ENCODE measurements at regions of chr1 and their contacts with region 1.

Region 1: GRCh38 chr1:153922972-153923925 is at the start of gene GATAD2B:
- DNase-seq: peak; percentile 100
- H3K4me3 ChIP-seq: peak within 1 kb of the TSS; percentile 68 to 91 (median 85)
- H3K27ac ChIP-seq: peak within 1 kb of the TSS; percentile 60
- H3K4me1 ChIP-seq: peaks cover 24% of the 10 kb centered on the region
- H3K27me3 ChIP-seq: no peaks in the 10 kb centered on the region
- CTCF ChIP-seq: no peak
- POLR2A ChIP-seq: peak; percentile 80
- total RNA-seq, gene GATAD2B: 46.3 and 49.2 TPM in 2 replicates

Region 2: DNA sequence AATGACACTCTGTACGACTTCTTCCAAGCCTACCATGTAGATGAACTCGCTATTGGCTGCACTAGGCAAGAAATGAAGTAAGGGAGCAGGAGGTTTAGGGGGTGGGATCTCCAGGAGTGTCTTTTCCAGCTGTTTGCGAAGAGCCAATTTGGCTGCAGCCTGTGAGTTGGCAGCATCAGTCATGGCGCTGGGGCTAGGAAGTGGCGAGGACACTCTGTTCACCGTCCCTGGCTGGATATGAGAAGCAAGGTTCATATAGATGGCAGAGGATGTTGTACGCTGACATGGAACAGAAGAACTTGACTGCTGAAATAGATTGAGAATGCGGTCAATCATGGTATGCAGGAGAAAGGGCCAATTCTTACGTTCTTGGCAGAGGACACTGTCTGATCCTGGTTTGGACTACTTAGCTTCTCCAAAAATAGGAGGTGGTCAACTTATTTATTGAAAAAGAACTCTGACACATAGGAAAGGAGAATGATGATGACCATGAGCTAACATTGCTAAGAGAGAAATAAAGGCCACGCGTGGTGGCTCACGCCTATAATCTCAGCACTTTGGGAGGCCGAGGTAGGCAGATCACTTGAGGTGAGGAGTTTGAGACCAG is 106.9 kb before region 1 on chr1:
- CTCF ChIA-PET with region 1: interaction called, 11 read pairs
- POLR2A ChIA-PET with region 1: no interaction called
- dilution Hi-C with region 1: no loop called
- intact Hi-C with region 1: loop called (anchors 1 kb)
- DNase-seq: no peak
- H3K4me3 ChIP-seq: no peak overlapping the region
- H3K27ac ChIP-seq: no peak overlapping the region
- H3K4me1 ChIP-seq: peaks cover 10% of the 10 kb centered on the region
- H3K27me3 ChIP-seq: no peaks in the 10 kb centered on the region
- CTCF ChIP-seq: no peak
- POLR2A ChIP-seq: no peak

Region 3: DNA sequence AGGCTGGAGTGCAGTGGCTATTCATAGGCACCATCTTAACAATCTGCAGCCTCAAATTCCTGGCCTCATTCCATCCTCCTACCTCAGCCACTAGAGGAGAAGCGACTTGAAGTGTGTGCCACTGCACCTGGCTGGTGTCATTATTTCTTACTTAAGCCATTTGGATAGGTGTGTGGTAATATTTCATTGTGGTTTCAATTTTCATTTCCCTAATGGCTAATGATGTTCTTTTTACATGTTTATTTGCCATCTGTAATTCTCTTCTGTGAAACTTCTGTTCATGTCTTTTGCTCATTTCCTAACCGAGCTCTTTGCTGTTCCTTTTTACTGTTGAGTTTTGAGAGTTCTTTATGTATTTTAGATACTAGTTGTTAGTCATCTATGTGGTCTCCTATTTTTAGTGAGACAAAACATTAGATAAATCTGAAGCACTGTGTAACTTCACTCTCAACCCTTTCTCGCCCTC is 81.2 kb before region 1 on chr1:
- CTCF ChIA-PET with region 1: no interaction called
- POLR2A ChIA-PET with region 1: no interaction called
- dilution Hi-C with region 1: no loop called
- intact Hi-C with region 1: no loop called
- DNase-seq: no peak
- H3K4me3 ChIP-seq: no peak overlapping the region
- H3K27ac ChIP-seq: no peak overlapping the region
- H3K4me1 ChIP-seq: no peaks in the 10 kb centered on the region
- H3K27me3 ChIP-seq: no peaks in the 10 kb centered on the region
- CTCF ChIP-seq: no peak
- POLR2A ChIP-seq: no peak

Region 4: DNA sequence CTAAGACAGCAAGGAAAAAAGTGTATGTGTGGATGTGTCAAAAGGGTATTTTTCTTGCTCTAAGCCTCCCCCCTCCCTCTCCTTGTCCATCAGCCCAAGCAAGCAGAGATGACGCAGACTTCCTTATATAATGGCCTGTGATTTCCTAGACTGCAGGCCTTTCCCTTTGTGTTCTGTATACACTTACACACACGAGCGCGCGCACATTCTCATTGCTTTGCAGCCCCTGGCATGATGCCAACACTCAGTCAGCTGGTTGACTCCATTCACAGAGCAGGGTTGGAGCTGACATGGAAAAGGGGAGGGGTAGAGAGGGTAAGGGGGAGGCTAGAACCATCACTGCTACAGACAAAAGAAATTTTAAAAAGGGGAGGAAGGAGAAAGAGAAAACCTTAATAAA is 42.3 kb before region 1 on chr1:
- CTCF ChIA-PET with region 1: interaction called, 4 read pairs
- POLR2A ChIA-PET with region 1: interaction called, 3 read pairs
- dilution Hi-C with region 1: no loop called
- intact Hi-C with region 1: loop called (anchors 1 kb)
- DNase-seq: peak; percentile 99
- H3K4me3 ChIP-seq: peak overlapping the region; percentile 12 to 70 (median 32)
- H3K27ac ChIP-seq: peak overlapping the region; percentile 81
- H3K4me1 ChIP-seq: peaks cover 23% of the 10 kb centered on the region
- H3K27me3 ChIP-seq: no peaks in the 10 kb centered on the region
- CTCF ChIP-seq: no peak
- POLR2A ChIP-seq: no peak

Region 5: GRCh38 chr1:153958111-153958960 is 35.1 kb after region 1 on chr1 and contains the start of gene CRTC2:
- CTCF ChIA-PET with region 1: interaction called, 5 read pairs
- POLR2A ChIA-PET with region 1: no interaction called
- dilution Hi-C with region 1: no loop called
- intact Hi-C with region 1: loop called (anchors 1 kb)
- DNase-seq: peak; percentile 98
- H3K4me3 ChIP-seq: peak within 1 kb of the TSS; percentile 47 to 80 (median 75)
- H3K27ac ChIP-seq: peak within 1 kb of the TSS; percentile 18
- H3K4me1 ChIP-seq: peaks cover 35% of the 10 kb centered on the region
- H3K27me3 ChIP-seq: no peaks in the 10 kb centered on the region
- CTCF ChIP-seq: no peak
- POLR2A ChIP-seq: peak; percentile 33
- total RNA-seq, gene CRTC2: 39.0 and 42.2 TPM in 2 replicates

Region 6: GRCh38 chr1:154183045-154183915 is 260.0 kb after region 1 on chr1:
- CTCF ChIA-PET with region 1: no interaction called
- POLR2A ChIA-PET with region 1: no interaction called
- dilution Hi-C with region 1: no loop called
- intact Hi-C with region 1: no loop called
- DNase-seq: peak; percentile 95
- H3K4me3 ChIP-seq: peak overlapping the region; percentile 87 to 99 (median 93)
- H3K27ac ChIP-seq: peak overlapping the region; percentile 64
- H3K4me1 ChIP-seq: peaks cover 30% of the 10 kb centered on the region
- H3K27me3 ChIP-seq: peaks cover 0 to 3% of the 10 kb centered on the region in 2 experiments
- CTCF ChIP-seq: no peak
- POLR2A ChIP-seq: peak; percentile 72